Left lung (tissue), 14 donors: ENCODE measurements at regions of chr11 and their contacts with region 1.

Region 1: DNA sequence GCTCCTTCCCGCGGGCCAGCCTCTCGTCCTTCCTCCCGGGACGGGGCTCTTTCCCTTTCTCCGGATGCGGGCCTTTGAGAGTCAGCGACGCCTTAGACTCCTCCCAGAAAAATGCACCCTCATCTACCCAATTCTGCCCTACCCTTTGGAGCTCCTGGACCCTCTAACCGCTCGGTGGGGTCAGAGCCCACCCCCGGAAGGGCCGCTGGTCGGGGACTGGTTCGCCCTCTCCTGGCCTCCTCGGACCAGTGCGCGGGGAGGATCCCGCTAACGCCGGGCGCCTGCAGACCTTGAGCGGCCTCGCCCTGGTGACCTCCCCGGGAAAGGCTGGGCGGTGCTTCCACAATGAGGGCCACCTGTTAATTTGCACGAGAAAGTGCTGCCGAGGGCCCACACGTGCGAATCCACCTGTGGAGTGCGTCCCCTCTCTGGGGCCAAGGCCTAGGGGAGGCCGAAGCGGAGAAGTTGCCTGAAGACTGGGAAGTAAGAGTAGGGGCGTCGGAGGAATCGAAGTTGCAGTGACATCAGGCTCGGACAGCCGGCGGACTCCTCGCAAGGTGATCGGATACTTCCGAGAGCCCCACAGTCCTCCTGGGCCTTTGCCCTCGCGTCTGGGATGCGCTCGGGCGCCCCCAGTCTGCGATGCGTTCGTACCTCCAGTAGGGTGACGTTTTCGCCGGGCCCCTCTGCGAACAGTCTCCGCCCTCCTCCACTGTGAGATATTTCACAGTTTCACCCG is 61.5 kb downstream of the ENDOD1 start:
- DNase-seq: peak; percentile 89 to 95 (median 94)
- ATAC-seq: peak; percentile 93
- H3K4me3 ChIP-seq: peak overlapping the region; percentile 58 to 75
- H3K27ac ChIP-seq: peak overlapping the region; percentile 93 to 95
- H3K4me1 ChIP-seq: peaks cover 4 to 47% of the 10 kb centered on the region in 2 donors
- H3K27me3 ChIP-seq: peaks cover 0 to 5% of the 10 kb centered on the region in 2 donors
- CTCF ChIP-seq: peak; percentile 60 to 88

Region 2: DNA sequence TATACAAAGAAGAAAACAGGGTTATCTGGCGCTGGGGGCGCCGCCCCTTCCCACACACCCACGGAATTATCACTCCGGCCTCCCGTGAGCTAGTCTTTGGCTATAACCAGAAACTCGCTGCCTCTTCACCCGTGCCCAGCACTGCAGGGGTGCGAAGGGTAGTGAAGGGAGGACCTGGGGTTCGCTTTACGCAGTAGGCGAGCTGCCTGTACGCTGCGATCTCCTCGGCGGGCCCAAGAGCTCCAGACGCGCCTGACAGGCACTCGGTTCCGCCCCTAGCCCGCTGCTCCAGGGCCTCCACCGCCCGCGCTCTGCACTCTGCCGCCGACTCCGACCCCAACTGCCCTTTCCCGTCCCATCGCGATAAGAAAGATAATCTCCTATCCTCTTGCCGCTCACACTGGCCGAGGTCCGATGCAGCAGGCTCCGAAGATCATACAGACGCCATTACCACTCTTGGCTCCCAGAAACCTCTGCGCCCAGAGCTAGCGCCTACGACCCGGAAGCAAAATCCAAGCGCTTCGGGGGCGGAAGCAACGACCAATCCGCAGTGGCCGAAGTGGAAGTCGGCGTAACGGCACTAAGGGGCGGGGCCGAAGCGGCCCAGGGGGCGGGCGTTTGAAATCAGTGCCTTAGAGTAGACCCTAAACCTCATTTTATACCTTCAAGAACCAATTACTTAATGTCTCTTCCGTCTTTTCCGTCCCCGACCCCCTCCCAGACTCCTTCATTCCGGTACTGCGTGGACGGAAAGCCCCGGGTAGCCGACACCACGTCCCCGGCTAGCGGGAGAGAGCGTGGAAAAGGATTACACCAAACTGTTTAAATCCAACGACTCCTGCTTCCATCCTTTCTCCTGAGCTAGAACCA is 177.8 kb before region 1 on chr11 and contains the starts of genes CWC15 and KDM4D:
- intact Hi-C with region 1: loop called in 1 of 2 experiments (anchors 10 kb)
- DNase-seq: peak; percentile 92 to 97 (median 96)
- ATAC-seq: peak; percentile 100
- H3K4me3 ChIP-seq: peak within 1 kb of the TSS; percentile 75 to 81
- H3K27ac ChIP-seq: peak within 1 kb of the TSS; percentile 58 to 75
- H3K4me1 ChIP-seq: peaks cover 9 to 20% of the 10 kb centered on the region in 2 donors
- H3K27me3 ChIP-seq: no peaks in the 10 kb centered on the region
- CTCF ChIP-seq: no peak
- polyA plus RNA-seq, gene CWC15: 93.0 to 108 (median 101) TPM
- polyA plus RNA-seq, gene KDM4D: 1.8 to 2.5 (median 1.9) TPM

Region 3: GRCh38 chr11:95074806-95075563 is 76.1 kb before region 1 on chr11:
- intact Hi-C with region 1: loop called in 1 of 2 experiments (anchors 5 kb)
- DNase-seq: peak in 3 of 4 donors; percentile 47 to 65 (median 50)
- ATAC-seq: peak; percentile 44
- H3K4me3 ChIP-seq: no peak overlapping the region
- H3K27ac ChIP-seq: peak overlapping the region; percentile 39 to 48
- H3K4me1 ChIP-seq: peaks cover 12 to 34% of the 10 kb centered on the region in 2 donors
- H3K27me3 ChIP-seq: no peaks in the 10 kb centered on the region
- CTCF ChIP-seq: no peak

Region 4: GRCh38 chr11:95705485-95706124 is 554.5 kb after region 1 on chr11:
- intact Hi-C with region 1: loop called (anchors 5 to 10 kb)
- DNase-seq: peak; percentile 85 to 92 (median 86)
- ATAC-seq: peak; percentile 98
- H3K4me3 ChIP-seq: no peak overlapping the region
- H3K27ac ChIP-seq: no peak overlapping the region
- H3K4me1 ChIP-seq: peaks cover 16 to 21% of the 10 kb centered on the region in 2 donors
- H3K27me3 ChIP-seq: no peaks in the 10 kb centered on the region
- CTCF ChIP-seq: peak; percentile 88 to 91

Region 5: GRCh38 chr11:95764267-95764898 is 613.3 kb after region 1 on chr11:
- intact Hi-C with region 1: loop called in 1 of 2 experiments (anchors 5 kb)
- DNase-seq: peak in 2 of 4 donors; percentile 36 to 67
- ATAC-seq: peak; percentile 88
- H3K4me3 ChIP-seq: no peak overlapping the region
- H3K27ac ChIP-seq: no peak overlapping the region
- H3K4me1 ChIP-seq: peaks cover 0 to 13% of the 10 kb centered on the region in 2 donors
- H3K27me3 ChIP-seq: no peaks in the 10 kb centered on the region
- CTCF ChIP-seq: peak; percentile 59 to 64